ENCODE measurements at regions of chr18 and their contacts with region 1.

Region 1: DNA sequence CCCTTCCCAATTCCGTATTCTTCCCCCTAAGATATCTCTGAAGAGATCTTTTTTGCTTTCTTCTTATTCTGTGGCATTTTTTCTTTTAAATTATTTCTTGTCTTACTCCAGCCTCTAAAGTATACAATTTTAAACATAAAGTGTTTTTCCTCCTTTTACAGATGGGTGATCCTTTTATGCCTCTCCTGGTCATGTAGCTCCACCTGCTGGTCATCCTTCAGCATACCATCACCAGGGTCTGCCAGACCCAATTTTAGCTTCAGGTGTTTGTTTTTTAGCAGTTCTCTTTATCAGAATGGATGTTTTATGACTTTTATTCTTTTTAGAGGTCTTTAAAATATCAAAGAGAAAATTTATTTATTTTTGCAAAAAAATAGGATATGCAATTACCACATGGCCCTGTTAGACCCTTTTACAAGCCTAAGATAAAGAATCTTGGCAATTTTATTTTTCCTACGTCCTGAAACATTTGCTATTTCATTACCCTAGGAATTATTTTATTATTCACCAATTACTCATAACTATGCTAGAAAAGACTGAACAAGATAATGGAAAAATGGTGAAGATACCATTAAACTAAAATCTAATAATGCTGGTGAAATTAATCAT is 55.5 kb downstream of the PIGN start:
- DNase-seq: peak; percentile 29
- H3K4me3 ChIP-seq: no peak overlapping the region
- H3K27ac ChIP-seq: no peak overlapping the region
- H3K4me1 ChIP-seq: peaks cover 2% of the 10 kb centered on the region
- H3K27me3 ChIP-seq: no peaks in the 10 kb centered on the region
- CTCF ChIP-seq: peak; percentile 93 to 96

Region 2: GRCh38 chr18:60684843-60685513 is 1446.4 kb before region 1 on chr18:
- CTCF ChIA-PET with region 1: no interaction called
- dilution Hi-C with region 1: no loop called
- in situ Hi-C with region 1: no loop called
- intact Hi-C with region 1: loop called (anchors 10 kb)
- DNase-seq: peak; percentile 17
- H3K4me3 ChIP-seq: no peak overlapping the region
- H3K27ac ChIP-seq: no peak overlapping the region
- H3K4me1 ChIP-seq: peaks cover 6% of the 10 kb centered on the region
- H3K27me3 ChIP-seq: no peaks in the 10 kb centered on the region
- CTCF ChIP-seq: peak; percentile 62 to 73

Region 3: DNA sequence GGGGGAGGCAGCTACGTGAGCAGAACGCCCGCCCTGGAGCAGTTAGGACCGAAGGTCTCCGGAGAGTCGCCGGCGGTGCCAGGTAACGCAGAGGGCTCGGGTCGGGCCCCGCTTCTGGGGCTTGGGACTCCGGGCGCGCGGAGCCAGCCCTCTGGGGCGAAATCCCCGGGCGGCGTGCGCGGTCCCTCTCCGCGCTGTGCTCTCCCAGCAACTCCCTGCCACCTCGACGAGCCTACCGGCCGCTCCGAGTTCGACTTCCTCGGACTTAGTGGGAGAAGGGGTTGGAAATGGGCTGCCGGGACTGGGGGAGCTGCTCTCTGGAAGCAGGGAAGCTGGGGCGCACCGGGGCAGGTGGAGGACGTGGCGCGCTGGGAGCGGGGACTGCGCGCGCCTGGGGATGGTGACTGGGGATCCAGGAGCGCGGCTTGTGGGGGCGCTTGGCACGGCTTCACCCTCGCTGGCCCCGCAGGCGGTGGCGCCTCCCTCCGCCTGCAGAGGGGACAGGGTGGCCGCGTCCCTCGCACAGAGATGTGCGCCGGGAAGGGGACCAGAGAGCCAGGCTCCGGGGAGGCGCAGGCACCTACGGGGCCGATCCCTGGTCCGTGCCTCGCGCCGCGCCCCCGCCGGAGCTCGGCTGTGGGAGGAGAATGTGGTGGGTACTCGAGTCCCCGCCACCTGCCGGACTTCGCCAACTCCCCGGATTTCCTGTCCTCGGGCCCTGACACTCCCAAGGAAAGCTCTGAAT is 797.5 kb before region 1 on chr18:
- CTCF ChIA-PET with region 1: no interaction called
- dilution Hi-C with region 1: no loop called
- in situ Hi-C with region 1: loop called in 1 of 2 experiments (anchors 25 kb)
- intact Hi-C with region 1: no loop called
- DNase-seq: peak; percentile 5
- H3K4me3 ChIP-seq: no peak overlapping the region
- H3K27ac ChIP-seq: no peak overlapping the region
- H3K4me1 ChIP-seq: peaks cover 5% of the 10 kb centered on the region
- H3K27me3 ChIP-seq: peaks cover 25% of the 10 kb centered on the region
- CTCF ChIP-seq: no peak

Region 4: GRCh38 chr18:61551586-61551985 is 579.8 kb before region 1 on chr18:
- CTCF ChIA-PET with region 1: no interaction called
- dilution Hi-C with region 1: no loop called
- in situ Hi-C with region 1: no loop called
- intact Hi-C with region 1: loop called (anchors 1 kb)
- DNase-seq: peak; percentile 68
- H3K4me3 ChIP-seq: no peak overlapping the region
- H3K27ac ChIP-seq: no peak overlapping the region
- H3K4me1 ChIP-seq: peaks cover 4% of the 10 kb centered on the region
- H3K27me3 ChIP-seq: no peaks in the 10 kb centered on the region
- CTCF ChIP-seq: peak; percentile 82 to 95

Region 5: DNA sequence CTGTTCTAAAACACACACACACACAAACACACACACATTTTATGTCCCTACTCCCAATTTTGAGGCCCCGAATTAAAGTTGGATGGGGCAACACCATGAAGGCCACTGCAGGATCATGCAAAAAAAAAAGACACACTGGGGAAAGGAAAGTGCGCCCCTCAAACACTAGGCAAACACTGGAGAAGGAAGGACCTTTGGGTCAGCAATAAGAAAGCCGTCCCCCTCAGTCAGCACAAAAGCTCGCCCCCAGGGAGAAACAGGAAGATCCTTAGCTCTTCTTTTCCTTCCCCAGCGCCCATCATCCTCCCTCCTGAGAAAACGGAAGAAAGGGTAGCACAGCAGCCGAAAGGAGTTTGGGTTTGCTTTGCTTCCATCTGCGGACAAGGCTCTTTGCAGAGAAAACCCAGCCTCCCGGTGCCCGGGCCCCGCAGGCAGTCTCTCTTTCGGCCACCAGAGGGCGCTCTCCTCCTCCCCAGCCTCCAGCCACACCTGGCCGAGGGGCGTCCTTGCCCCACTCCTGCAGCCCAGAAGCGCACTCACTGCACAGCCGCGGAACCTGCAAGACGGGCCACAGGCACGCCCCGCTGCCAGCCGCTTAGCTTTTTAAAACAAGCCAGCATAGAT is 549.7 kb before region 1 on chr18:
- CTCF ChIA-PET with region 1: no interaction called
- dilution Hi-C with region 1: no loop called
- in situ Hi-C with region 1: loop called (anchors 10 to 25 kb)
- intact Hi-C with region 1: loop called (anchors 1 kb)
- DNase-seq: peak; percentile 59
- H3K4me3 ChIP-seq: peak overlapping the region; percentile 44 to 56 (median 50)
- H3K27ac ChIP-seq: no peak overlapping the region
- H3K4me1 ChIP-seq: peaks cover 10% of the 10 kb centered on the region
- H3K27me3 ChIP-seq: no peaks in the 10 kb centered on the region
- CTCF ChIP-seq: peak; percentile 85 to 98

Region 6: GRCh38 chr18:61893971-61894750 is 237.2 kb before region 1 on chr18:
- CTCF ChIA-PET with region 1: interaction called, 8 read pairs
- dilution Hi-C with region 1: no loop called
- in situ Hi-C with region 1: loop called in 1 of 2 experiments (anchors 10 kb)
- intact Hi-C with region 1: loop called (anchors 2 kb)
- DNase-seq: peak; percentile 79
- H3K4me3 ChIP-seq: peak overlapping the region; percentile 66 to 91 (median 79)
- H3K27ac ChIP-seq: peak overlapping the region; percentile 48
- H3K4me1 ChIP-seq: peaks cover 45% of the 10 kb centered on the region
- H3K27me3 ChIP-seq: no peaks in the 10 kb centered on the region
- CTCF ChIP-seq: peak in 1 of 2 donors; percentile 49

Region 7: DNA sequence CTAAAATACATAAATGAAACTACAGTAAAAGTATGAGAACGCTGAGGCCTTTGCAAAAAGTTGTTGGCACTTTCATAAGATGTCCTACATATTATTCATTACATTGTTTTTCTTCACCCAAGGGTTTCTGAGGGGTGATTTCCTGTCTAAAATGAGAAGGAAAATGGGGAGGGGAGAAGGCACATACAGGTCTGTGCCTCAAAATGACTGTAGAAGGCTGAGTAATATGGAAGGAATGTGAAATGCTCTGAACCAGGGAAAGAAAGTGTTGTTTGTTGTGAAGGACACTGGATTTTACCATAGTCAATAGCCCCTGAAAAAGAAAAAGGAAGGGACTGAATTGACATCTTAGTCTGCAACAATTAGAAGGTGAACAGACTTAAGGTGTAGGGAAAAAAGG is 139.1 kb before region 1 on chr18:
- CTCF ChIA-PET with region 1: no interaction called
- dilution Hi-C with region 1: no loop called
- in situ Hi-C with region 1: no loop called
- intact Hi-C with region 1: loop called (anchors 2 kb)
- DNase-seq: peak; percentile 80
- H3K4me3 ChIP-seq: no peak overlapping the region
- H3K27ac ChIP-seq: peak overlapping the region; percentile 61
- H3K4me1 ChIP-seq: peaks cover 53% of the 10 kb centered on the region
- H3K27me3 ChIP-seq: no peaks in the 10 kb centered on the region
- CTCF ChIP-seq: no peak

Region 8: GRCh38 chr18:62069556-62069955 is 61.8 kb before region 1 on chr18:
- CTCF ChIA-PET with region 1: no interaction called
- dilution Hi-C with region 1: no loop called
- in situ Hi-C with region 1: no loop called
- intact Hi-C with region 1: no loop called
- DNase-seq: peak; percentile 13
- H3K4me3 ChIP-seq: no peak overlapping the region
- H3K27ac ChIP-seq: no peak overlapping the region
- H3K4me1 ChIP-seq: no peaks in the 10 kb centered on the region
- H3K27me3 ChIP-seq: no peaks in the 10 kb centered on the region
- CTCF ChIP-seq: no peak

Measured in mammary epithelial cell (primary cell).